Esophagus squamous epithelium (tissue), 5 donors: ENCODE measurements at regions of chr2 and their contacts with region 1.

Region 1: DNA sequence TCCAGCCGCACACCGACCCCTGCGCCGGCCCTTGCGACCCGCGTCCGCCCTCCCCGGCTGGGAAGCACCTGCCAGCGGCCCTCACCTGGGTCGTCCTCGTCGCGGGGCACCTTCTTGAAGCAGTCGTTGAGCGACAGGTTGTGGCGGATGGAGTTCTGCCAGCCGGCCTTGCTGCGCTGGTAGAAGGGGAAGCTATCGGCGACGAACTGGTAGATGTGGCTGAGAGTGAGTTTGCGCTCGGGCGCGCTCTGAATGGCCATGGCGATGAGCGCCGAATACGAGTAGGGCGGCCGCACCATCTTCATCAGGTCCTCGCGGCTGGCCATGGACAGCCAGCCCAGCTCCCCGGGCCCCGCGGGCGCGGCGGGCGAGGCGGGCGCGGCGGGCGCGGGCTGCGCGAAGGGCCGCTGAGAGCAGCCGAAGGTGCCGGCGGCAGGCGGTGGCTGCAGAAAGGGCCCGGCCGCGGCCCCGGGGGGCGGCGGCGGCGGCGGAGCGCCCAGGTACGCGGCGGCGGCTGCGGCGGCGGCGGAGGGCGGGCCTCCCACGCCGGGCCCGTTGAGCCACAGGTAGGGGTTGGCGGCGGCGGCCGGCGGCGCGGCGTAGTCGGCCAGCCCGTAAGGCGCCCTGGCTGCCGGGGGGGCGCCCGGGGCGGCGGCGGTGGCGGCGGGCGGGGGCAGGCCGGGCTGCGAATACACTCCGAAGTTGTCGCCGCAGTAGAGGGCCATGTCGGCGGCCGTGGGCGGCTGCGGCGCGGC is 505 bp downstream of the FOXI3 start:
- DNase-seq: no peak
- H3K4me3 ChIP-seq: peak overlapping the region; percentile 20 to 65 (median 36)
- H3K27ac ChIP-seq: no peak overlapping the region
- H3K4me1 ChIP-seq: peaks cover 0 to 19% (median 4%) of the 10 kb centered on the region in 3 donors
- H3K27me3 ChIP-seq: peaks cover 15 to 100% (median 27%) of the 10 kb centered on the region in 4 donors
- CTCF ChIP-seq: no peak
- POLR2A ChIP-seq: no peak

Region 2: GRCh38 chr2:88190808-88191721 is 260.9 kb before region 1 on chr2:
- intact Hi-C with region 1: loop called (anchors 10 kb)
- DNase-seq: no peak
- H3K4me3 ChIP-seq: no peak overlapping the region
- H3K27ac ChIP-seq: no peak overlapping the region
- H3K4me1 ChIP-seq: peaks cover 0 to 12% (median 3%) of the 10 kb centered on the region in 3 donors
- H3K27me3 ChIP-seq: peaks cover 0 to 50% (median 0%) of the 10 kb centered on the region in 4 donors
- CTCF ChIP-seq: peak; percentile 26 to 63 (median 44)
- POLR2A ChIP-seq: no peak